Heart left ventricle (tissue), 16 donors: ENCODE measurements at regions of chr7 and their contacts with region 1.

Region 1: DNA sequence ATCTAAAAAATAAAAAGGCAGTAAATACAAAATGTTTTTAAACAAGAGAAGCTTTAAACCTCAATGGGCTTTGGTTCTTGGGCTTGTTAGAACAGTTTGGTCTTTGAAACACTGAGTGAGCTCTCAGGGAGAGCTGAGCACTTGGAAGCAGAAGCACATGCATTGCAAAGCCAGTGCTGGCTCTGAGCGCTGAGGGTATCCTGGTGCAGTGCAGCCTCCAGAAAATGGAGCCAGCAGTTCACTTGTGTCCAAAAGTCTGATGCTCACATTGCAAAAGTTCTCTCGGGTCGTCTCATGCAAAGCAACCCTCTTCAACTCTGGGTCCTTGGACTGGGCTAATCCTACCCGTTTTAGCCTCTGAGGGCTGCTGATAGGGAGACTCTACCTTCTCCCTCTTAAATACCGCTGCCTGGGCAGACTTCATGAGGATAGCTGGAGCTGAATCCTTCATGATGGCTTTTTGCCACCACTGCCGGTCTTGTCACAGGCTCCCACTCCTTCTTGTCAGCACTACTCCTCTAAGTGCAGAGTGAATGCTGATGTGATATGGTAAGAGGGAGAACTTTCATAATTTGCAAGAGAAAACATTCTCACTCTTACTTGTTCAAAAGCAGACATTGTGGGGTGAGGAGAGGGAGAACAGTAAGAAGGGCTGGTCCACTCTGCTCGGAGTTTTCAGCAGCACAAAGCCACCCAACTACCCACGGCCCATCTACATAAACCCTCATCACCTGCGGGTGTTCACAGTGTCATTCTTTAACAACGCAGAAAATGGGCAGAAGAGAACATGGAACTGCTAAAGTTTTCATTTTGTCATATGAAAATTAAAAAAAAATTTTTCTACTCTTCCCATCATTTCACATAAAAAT is 42.2 kb upstream of the BMPER start:
- DNase-seq: peak in 1 of 5 donors; percentile 67
- ATAC-seq: peak; percentile 70 to 91 (median 83)
- H3K4me3 ChIP-seq: peak overlapping the region in 1 of 12 donors; percentile 14
- H3K27ac ChIP-seq: no peak overlapping the region
- H3K4me1 ChIP-seq: peaks cover 0 to 13% (median 7%) of the 10 kb centered on the region in 12 donors
- H3K27me3 ChIP-seq: peaks cover 0 to 8% (median 0%) of the 10 kb centered on the region in 9 donors
- CTCF ChIP-seq: no peak
- POLR2A ChIP-seq: no peak

Region 2: DNA sequence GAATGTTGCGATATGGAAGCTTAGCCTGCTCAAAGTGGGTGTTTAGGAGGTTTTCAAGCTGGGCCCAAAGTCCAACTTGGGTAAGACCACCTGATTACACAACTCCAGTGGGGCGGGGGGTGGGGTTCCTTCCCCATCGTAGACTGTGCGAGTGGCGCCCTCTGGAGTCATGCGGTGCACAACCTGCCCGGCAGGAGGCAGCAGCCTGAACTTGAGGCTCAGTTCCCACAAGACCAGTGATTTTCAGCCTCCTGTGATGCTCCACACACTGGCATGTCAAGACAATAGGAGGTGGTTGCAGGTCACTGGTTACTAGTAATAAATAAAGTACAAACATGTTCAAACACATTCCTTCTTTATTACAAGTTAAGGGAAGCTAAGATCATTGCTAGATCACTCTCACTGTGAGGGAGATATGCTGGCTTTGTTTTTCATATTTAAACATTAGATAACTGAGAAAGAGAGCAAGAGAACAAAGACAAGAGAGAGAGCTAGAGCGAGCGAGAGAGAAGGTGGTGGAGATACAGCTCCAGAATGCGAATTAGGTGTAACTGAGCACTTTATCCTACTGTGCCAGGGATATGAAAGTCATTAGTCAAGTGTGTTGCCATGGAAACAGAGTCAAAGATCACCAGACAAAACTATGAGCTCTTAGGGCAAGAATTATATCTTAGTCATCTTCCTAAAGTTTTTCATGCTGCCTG is 55.2 kb before region 1 on chr7:
- intact Hi-C with region 1: loop called in 1 of 10 experiments (anchors 5 kb)
- DNase-seq: no peak
- ATAC-seq: no peak
- H3K4me3 ChIP-seq: no peak overlapping the region
- H3K27ac ChIP-seq: no peak overlapping the region
- H3K4me1 ChIP-seq: peaks cover 0 to 21% (median 12%) of the 10 kb centered on the region in 12 donors
- H3K27me3 ChIP-seq: no peaks in the 10 kb centered on the region
- CTCF ChIP-seq: peak in 3 of 12 donors; percentile 9 to 14 (median 12)
- POLR2A ChIP-seq: no peak